Heart left ventricle (tissue), 16 donors: ENCODE measurements at regions of chr13 and their contacts with region 1.

Region 1: GRCh38 chr13:33799950-33800592 is 17.9 kb upstream of the RFC3 start:
- DNase-seq: no peak
- ATAC-seq: peak in 3 of 4 donors; percentile 28 to 58 (median 53)
- H3K4me3 ChIP-seq: peak overlapping the region in 5 of 12 donors; percentile 4 to 29 (median 15)
- H3K27ac ChIP-seq: peak overlapping the region in 8 of 12 donors; percentile 4 to 45 (median 18)
- H3K4me1 ChIP-seq: peaks cover 0 to 29% (median 13%) of the 10 kb centered on the region in 12 donors
- H3K27me3 ChIP-seq: no peaks in the 10 kb centered on the region
- CTCF ChIP-seq: peak in 11 of 12 donors; percentile 21 to 65 (median 54)
- POLR2A ChIP-seq: no peak

Region 2: GRCh38 chr13:33931397-33932311 is 131.6 kb after region 1 on chr13:
- intact Hi-C with region 1: loop called in 1 of 10 experiments (anchors 10 kb)
- DNase-seq: peak in 1 of 5 donors; percentile 20
- ATAC-seq: peak in 3 of 4 donors; percentile 79 to 87 (median 84)
- H3K4me3 ChIP-seq: no peak overlapping the region
- H3K27ac ChIP-seq: no peak overlapping the region
- H3K4me1 ChIP-seq: peaks cover 0 to 12% (median 0%) of the 10 kb centered on the region in 12 donors
- H3K27me3 ChIP-seq: no peaks in the 10 kb centered on the region
- CTCF ChIP-seq: peak; percentile 26 to 71 (median 57)
- POLR2A ChIP-seq: no peak

Region 3: DNA sequence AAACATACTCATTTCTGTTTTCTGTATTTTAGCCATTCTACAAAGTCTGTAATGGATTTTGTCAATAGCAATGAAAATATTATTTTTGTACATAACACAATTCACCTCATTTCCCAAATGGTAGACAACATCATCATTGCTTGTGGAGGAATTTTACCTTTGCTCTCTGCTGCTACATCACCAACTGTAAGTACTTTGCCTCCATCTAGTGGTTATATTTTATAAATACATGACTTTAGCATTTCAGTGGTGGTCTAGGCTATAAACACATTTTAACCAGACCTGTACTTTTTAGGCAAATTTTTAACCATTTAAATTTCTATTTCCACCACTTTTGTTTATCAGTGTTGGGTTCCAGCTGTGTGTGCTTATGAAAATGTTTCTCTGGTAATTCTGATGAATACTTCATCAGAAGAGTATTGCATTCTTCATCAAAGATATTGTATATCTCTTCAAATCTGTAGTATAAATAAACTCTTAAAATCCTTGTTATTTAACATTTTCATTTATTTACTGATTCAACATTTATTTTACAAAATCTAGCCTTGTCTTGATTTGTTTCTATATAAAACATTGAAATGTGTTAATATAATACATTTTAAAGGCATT is 1364.4 kb after region 1 on chr13:
- intact Hi-C with region 1: loop called in 5 of 10 experiments (anchors 5 to 10 kb)
- DNase-seq: no peak
- ATAC-seq: peak in 3 of 4 donors; percentile 53 to 68 (median 61)
- H3K4me3 ChIP-seq: no peak overlapping the region
- H3K27ac ChIP-seq: no peak overlapping the region
- H3K4me1 ChIP-seq: peaks cover 0 to 11% (median 0%) of the 10 kb centered on the region in 12 donors
- H3K27me3 ChIP-seq: no peaks in the 10 kb centered on the region
- CTCF ChIP-seq: peak; percentile 39 to 77 (median 66)
- POLR2A ChIP-seq: no peak